ENCODE measurements at regions of chr19 and their contacts with region 1.

Region 1: DNA sequence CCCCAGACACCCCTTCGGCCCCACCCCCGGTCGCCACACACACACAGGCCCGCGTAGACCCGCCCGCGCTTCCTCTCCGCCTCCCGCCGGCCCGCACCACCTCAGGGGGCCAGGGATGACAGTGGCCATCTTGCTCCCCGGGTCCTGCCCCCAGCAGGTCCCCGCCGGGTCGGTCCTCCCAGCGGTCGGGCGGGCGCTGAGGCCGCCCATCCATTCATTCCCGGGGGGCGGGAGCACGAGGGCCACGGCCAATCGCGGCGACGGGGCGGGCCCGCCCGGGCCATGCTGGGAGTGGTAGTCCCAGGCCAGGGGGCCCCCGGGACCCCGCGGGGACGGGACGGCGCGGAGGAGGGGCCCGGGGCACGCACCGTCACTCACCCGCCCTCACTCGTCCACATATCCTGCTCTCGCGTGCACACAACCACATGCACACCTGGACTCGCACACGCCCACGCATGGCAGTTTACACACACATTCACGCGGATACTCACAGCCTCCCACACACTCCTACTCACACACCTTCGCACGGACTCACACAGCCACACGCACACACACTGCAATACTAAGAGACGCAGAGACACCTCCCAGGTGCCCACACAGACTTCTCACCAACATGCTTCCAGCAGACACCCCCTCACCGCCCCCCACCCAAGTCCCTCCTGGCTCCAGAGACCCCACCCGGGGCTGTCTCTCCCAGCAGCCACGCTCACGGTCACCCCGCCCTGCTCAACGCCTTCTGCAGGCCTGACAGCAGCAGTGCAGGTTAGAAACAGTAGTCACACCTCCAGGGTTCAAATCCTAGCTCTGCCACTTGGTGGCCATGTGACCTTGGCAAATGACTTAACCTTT is at the start of gene DPF1:
- DNase-seq: peak in 4 of 5 donors; percentile 52 to 73 (median 61)
- ATAC-seq: peak in 3 of 4 donors; percentile 82 to 89 (median 83)
- H3K4me3 ChIP-seq: peak within 1 kb of the TSS; percentile 14 to 58 (median 46)
- H3K27ac ChIP-seq: no peak within 1 kb of the TSS
- H3K4me1 ChIP-seq: peaks cover 7 to 24% (median 16%) of the 10 kb centered on the region in 12 donors
- H3K27me3 ChIP-seq: peaks cover 21 to 92% (median 58%) of the 10 kb centered on the region in 9 donors
- CTCF ChIP-seq: no peak
- POLR2A ChIP-seq: no peak
- total RNA-seq, gene DPF1: 0.11 to 1.2 (median 0.37) TPM in 7 of 9 donors, not detected in the others

Region 2: GRCh38 chr19:37893845-37894575 is 330.2 kb before region 1 on chr19:
- intact Hi-C with region 1: loop called in 2 of 10 experiments (anchors 5 to 10 kb)
- DNase-seq: no peak
- ATAC-seq: no peak
- H3K4me3 ChIP-seq: no peak overlapping the region
- H3K27ac ChIP-seq: no peak overlapping the region
- H3K4me1 ChIP-seq: peaks cover 0 to 4% (median 0%) of the 10 kb centered on the region in 12 donors
- H3K27me3 ChIP-seq: peaks cover 0 to 20% (median 0%) of the 10 kb centered on the region in 9 donors
- CTCF ChIP-seq: no peak
- POLR2A ChIP-seq: no peak

Region 3: DNA sequence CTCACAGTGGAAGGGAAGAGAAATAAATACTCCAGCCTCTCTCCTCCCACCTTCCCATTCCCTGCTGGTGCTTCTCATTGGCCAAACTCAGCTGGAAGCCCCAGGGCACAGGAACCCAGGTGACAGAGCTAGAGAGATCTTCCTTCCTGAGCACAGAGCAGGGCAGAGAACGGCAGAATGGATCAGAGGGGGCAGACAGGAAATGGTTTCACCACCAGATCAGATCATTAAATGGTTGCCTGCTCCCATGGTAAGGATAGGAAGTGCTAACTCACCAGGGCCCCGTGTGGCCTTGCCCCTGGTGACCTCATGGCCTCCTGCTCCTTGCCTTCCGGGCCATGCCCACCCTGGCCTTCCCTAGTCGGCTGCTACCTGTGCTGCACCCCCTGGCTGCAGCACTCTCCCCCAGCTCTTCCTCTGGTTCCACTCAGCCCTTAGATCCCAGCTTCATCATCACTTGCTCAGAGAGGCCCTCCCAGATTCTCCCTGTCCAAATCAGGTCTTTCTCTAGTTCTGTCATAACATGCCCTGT is 108.9 kb before region 1 on chr19:
- intact Hi-C with region 1: no loop called
- DNase-seq: no peak
- ATAC-seq: peak in 1 of 4 donors; percentile 16
- H3K4me3 ChIP-seq: no peak overlapping the region
- H3K27ac ChIP-seq: no peak overlapping the region
- H3K4me1 ChIP-seq: no peaks in the 10 kb centered on the region
- H3K27me3 ChIP-seq: no peaks in the 10 kb centered on the region
- CTCF ChIP-seq: no peak
- POLR2A ChIP-seq: no peak

Region 4: DNA sequence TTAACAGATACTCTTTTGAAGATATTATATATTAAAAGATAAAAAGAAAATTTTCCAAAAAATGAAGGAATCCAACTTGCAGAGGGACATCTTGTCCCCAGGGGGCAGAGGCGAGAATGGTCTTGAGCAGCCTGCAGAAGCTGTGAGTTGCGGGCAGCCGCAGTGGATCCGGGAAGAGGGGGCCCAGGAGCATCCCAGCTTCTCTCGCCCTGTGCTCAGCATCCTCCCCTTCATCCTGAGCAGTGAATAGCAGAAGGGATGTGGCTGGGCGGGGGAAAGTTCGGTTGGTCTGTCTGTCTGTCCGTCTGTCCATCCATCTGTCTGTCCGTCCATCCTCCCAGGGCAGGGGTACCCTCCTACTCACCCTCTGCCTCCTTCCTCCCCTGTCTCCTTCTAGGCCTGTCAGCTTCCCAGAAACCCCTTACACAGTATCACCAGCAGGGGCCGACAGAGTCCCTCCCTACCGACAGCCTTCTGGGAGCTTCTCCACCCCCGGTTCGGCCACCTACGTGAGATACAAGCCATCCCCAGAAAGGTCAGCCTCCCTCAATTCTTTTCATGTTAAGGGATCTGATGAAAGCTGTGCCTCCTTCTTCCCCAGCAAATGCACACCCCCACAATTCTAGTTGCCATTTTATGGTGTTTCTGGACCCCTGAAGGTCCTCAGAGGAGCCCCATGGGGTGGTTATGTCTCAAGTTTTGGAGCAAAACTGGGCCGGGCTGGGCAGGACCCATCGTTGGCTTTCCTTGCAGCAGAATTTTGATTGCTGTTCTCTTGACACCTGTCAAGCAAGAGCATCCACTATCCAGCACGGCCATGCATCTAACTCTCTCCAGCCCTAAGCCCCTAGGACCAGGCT is 81.8 kb before region 1 on chr19:
- intact Hi-C with region 1: loop called in 5 of 10 experiments (anchors 5 to 10 kb)
- DNase-seq: peak; percentile 49 to 77 (median 63)
- ATAC-seq: peak; percentile 70 to 86 (median 74)
- H3K4me3 ChIP-seq: no peak overlapping the region
- H3K27ac ChIP-seq: no peak overlapping the region
- H3K4me1 ChIP-seq: no peaks in the 10 kb centered on the region
- H3K27me3 ChIP-seq: no peaks in the 10 kb centered on the region
- CTCF ChIP-seq: peak; percentile 48 to 75 (median 68)
- POLR2A ChIP-seq: no peak

Region 5: GRCh38 chr19:38162094-38162493 is 62.1 kb before region 1 on chr19:
- intact Hi-C with region 1: no loop called
- DNase-seq: no peak
- ATAC-seq: no peak
- H3K4me3 ChIP-seq: no peak overlapping the region
- H3K27ac ChIP-seq: no peak overlapping the region
- H3K4me1 ChIP-seq: no peaks in the 10 kb centered on the region
- H3K27me3 ChIP-seq: no peaks in the 10 kb centered on the region
- CTCF ChIP-seq: no peak
- POLR2A ChIP-seq: no peak

Region 6: GRCh38 chr19:38250821-38251563 is 26.8 kb after region 1 on chr19:
- intact Hi-C with region 1: no loop called
- DNase-seq: peak; percentile 89 to 92 (median 91)
- ATAC-seq: peak; percentile 61 to 82 (median 74)
- H3K4me3 ChIP-seq: peak overlapping the region in 9 of 12 donors; percentile 33 to 91 (median 72)
- H3K27ac ChIP-seq: peak overlapping the region; percentile 74 to 100 (median 94)
- H3K4me1 ChIP-seq: peaks cover 0 to 78% (median 29%) of the 10 kb centered on the region in 12 donors
- H3K27me3 ChIP-seq: peaks cover 0 to 4% (median 0%) of the 10 kb centered on the region in 9 donors
- CTCF ChIP-seq: no peak
- POLR2A ChIP-seq: no peak